Activated CD4-positive, alpha-beta memory T cell treated with anti-CD3 and anti-CD28 coated beads for 36 hours (primary cell): ENCODE measurements at regions of chr1 and their contacts with region 1.

Region 1: GRCh38 chr1:61588736-61589672 is 135.9 kb downstream of the TM2D1 start:
- DNase-seq: peak; percentile 79
- H3K4me3 Mint-ChIP-seq: no peak overlapping the region
- H3K27ac Mint-ChIP-seq: no peak overlapping the region
- H3K4me1 Mint-ChIP-seq: no peaks in the 10 kb centered on the region
- H3K27me3 Mint-ChIP-seq: peaks cover 4% of the 10 kb centered on the region

Region 2: GRCh38 chr1:60848583-60849188 is 740.3 kb before region 1 on chr1:
- CTCF ChIA-PET with region 1: interaction called, 6 read pairs
- POLR2A ChIA-PET with region 1: no interaction called
- intact Hi-C with region 1: loop called (anchors 5 kb)
- DNase-seq: no peak
- H3K4me3 Mint-ChIP-seq: no peak overlapping the region
- H3K27ac Mint-ChIP-seq: no peak overlapping the region
- H3K4me1 Mint-ChIP-seq: no peaks in the 10 kb centered on the region
- H3K27me3 Mint-ChIP-seq: peaks cover 12% of the 10 kb centered on the region

Region 3: GRCh38 chr1:60978421-60979357 is 610.3 kb before region 1 on chr1:
- CTCF ChIA-PET with region 1: interaction called, 31 read pairs
- POLR2A ChIA-PET with region 1: no interaction called
- intact Hi-C with region 1: loop called (anchors 2 kb)
- DNase-seq: peak; percentile 58
- H3K4me3 Mint-ChIP-seq: no peak overlapping the region
- H3K27ac Mint-ChIP-seq: no peak overlapping the region
- H3K4me1 Mint-ChIP-seq: peaks cover 2% of the 10 kb centered on the region
- H3K27me3 Mint-ChIP-seq: peaks cover 3% of the 10 kb centered on the region

Region 4: GRCh38 chr1:61043010-61043820 is 545.8 kb before region 1 on chr1:
- CTCF ChIA-PET with region 1: interaction called, 37 read pairs
- POLR2A ChIA-PET with region 1: no interaction called
- intact Hi-C with region 1: no loop called
- DNase-seq: peak; percentile 90
- H3K4me3 Mint-ChIP-seq: peak overlapping the region; percentile 68
- H3K27ac Mint-ChIP-seq: no peak overlapping the region
- H3K4me1 Mint-ChIP-seq: peaks cover 5% of the 10 kb centered on the region
- H3K27me3 Mint-ChIP-seq: peaks cover 27% of the 10 kb centered on the region

Region 5: GRCh38 chr1:61552630-61553305 is 36.2 kb before region 1 on chr1:
- CTCF ChIA-PET with region 1: interaction called, 14 read pairs
- POLR2A ChIA-PET with region 1: no interaction called
- intact Hi-C with region 1: no loop called
- DNase-seq: no peak
- H3K4me3 Mint-ChIP-seq: no peak overlapping the region
- H3K27ac Mint-ChIP-seq: no peak overlapping the region
- H3K4me1 Mint-ChIP-seq: no peaks in the 10 kb centered on the region
- H3K27me3 Mint-ChIP-seq: peaks cover 4% of the 10 kb centered on the region

Region 6: DNA sequence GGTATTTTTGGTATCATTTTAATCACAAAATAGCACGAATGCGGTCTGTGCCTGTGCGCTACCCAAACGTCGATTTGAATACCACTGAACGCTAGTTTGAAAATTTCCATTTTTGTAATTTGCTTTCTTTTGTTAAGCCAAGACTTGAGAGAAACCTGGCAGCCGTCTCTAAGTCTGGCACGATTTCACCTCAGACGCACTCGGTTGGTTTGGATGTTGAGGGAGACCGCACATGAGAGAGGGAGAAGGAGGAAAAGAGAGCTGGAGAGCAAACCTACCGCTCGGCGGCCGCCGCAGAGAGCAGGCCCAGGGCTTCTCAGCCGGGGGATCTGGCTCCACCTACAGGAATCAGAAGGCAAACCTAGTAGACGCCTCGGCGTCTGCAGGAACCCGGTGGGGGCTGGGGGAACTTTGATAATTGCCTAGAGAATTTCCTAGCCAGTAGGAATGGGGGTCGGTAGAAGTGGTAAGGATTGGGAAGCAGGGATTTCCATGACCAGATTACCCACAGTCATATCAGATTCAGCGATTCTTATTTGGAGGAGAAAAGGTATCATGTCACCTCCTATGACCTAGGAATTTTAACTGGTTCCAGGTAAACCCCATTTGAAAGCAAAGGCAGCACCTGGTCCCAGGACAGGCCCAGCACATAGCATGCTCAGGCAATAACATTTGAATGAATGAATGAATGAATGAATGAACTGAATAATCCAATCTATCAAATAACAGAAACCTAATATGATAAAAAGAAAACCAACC is 52.8 kb after region 1 on chr1:
- CTCF ChIA-PET with region 1: interaction called, 12 read pairs
- POLR2A ChIA-PET with region 1: no interaction called
- intact Hi-C with region 1: no loop called
- DNase-seq: peak; percentile 76
- H3K4me3 Mint-ChIP-seq: peak overlapping the region; percentile 51
- H3K27ac Mint-ChIP-seq: no peak overlapping the region
- H3K4me1 Mint-ChIP-seq: peaks cover 9% of the 10 kb centered on the region
- H3K27me3 Mint-ChIP-seq: no peaks in the 10 kb centered on the region

Region 7: GRCh38 chr1:61851849-61852669 is 263.1 kb after region 1 on chr1:
- CTCF ChIA-PET with region 1: interaction called, 12 read pairs
- POLR2A ChIA-PET with region 1: no interaction called
- intact Hi-C with region 1: loop called (anchors 5 kb)
- DNase-seq: no peak
- H3K4me3 Mint-ChIP-seq: no peak overlapping the region
- H3K27ac Mint-ChIP-seq: no peak overlapping the region
- H3K4me1 Mint-ChIP-seq: no peaks in the 10 kb centered on the region
- H3K27me3 Mint-ChIP-seq: no peaks in the 10 kb centered on the region